Prostate gland (tissue), 2 donors: ENCODE measurements at regions of chrX and their contacts with region 1.

Region 1: GRCh38 chrX:154980330-154981096 is 42.0 kb downstream of the F8 start:
- DNase-seq: peak; percentile 62
- H3K4me3 ChIP-seq: peak overlapping the region; percentile 21
- H3K27ac ChIP-seq: no peak overlapping the region
- H3K4me1 ChIP-seq: no peaks in the 10 kb centered on the region
- H3K27me3 ChIP-seq: no peaks in the 10 kb centered on the region
- CTCF ChIP-seq: peak in 3 of 4 experiments; percentile 40 to 73 (median 67)
- POLR2A ChIP-seq: no peak

Region 2: DNA sequence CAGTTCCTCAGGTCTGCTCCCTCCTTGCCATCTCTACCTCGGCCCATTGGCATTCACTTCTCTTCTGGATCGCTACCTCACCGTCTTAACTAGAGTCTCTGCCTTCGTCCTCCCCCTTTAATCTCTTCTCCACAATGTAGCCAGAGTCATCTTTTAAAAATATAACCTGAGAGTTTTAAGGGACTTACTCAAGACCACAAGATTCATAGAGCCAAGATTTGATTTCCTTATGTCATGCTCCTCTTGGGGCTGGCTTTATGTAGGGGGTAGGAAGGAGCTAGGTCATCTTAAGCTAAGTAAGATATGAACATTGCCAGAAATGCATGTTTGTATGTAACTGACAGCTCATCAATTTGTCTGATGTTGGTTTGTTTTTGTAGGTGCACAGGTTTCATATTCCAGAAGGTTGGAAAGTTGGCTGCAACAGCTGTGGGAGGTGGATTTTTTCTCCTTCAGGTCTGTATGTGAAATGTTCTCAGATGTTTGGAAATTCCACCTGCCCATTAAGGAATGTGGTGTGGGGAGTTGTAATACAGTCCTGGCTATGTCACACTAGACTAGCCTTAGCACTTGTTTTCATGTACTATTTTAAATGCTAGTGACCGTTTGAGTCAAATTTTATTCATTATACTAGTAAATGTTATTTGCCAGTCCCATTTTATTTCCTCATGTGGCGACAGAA is 65.8 kb after region 1 on chrX:
- intact Hi-C with region 1: no loop called
- DNase-seq: no peak
- H3K4me3 ChIP-seq: no peak overlapping the region
- H3K27ac ChIP-seq: no peak overlapping the region
- H3K4me1 ChIP-seq: no peaks in the 10 kb centered on the region
- H3K27me3 ChIP-seq: no peaks in the 10 kb centered on the region
- CTCF ChIP-seq: no peak
- POLR2A ChIP-seq: no peak

Region 3: DNA sequence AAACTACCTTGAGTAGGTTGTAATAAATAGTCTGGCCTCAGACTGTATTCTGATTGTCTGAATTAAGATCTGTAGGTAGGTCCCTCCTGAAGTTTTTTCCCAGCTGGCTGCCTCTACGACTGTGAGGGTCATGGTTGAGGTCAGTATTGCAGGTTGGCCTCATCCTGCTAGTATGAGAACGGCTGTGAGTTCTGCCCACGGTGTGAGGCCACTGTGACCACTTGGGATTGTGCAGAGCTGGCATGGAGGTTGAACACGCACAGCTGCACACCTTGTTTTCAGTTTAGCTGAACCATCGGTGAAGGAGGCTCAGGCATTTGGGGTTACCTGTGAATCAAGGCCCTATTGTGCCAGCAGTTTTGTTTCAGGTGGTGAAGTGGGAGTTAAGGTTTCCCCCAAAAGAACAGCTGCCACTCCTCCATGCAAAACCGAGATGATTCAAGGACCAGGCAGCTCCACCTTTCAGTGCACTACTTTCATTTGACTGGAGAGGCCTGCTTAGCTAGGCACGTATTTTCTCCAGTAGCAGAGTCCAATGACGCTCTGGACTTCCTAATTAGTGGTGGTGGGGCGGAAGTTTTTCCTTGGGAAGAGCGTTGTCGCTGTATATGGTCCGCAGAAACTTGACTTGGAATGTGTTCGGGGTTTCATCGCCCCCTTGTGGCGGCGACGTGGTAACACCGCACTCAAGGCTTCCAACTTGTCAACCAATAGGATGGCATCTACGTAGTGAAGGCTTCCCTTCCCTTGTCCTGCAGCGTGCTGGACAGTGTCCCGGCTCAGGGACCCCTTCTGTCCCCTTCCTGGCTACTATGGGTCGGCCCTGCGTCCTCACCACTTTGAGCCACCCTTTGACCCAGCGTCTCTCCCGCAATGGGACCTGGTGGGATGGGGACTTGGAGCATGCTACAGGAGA is 76.6 kb after region 1 on chrX:
- intact Hi-C with region 1: loop called (anchors 2 kb)
- DNase-seq: peak; percentile 39
- H3K4me3 ChIP-seq: no peak overlapping the region
- H3K27ac ChIP-seq: no peak overlapping the region
- H3K4me1 ChIP-seq: no peaks in the 10 kb centered on the region
- H3K27me3 ChIP-seq: no peaks in the 10 kb centered on the region
- CTCF ChIP-seq: peak; percentile 51 to 74 (median 70)
- POLR2A ChIP-seq: no peak

Region 4: GRCh38 chrX:155070975-155071693 is 90.6 kb after region 1 on chrX and contains the starts of genes BRCC3, CMC4 and MTCP1:
- intact Hi-C with region 1: loop called (anchors 5 kb)
- DNase-seq: peak; percentile 73
- H3K4me3 ChIP-seq: peak within 1 kb of the TSS; percentile 47 to 54
- H3K27ac ChIP-seq: peak within 1 kb of the TSS; percentile 82 to 84
- H3K4me1 ChIP-seq: no peaks in the 10 kb centered on the region
- H3K27me3 ChIP-seq: no peaks in the 10 kb centered on the region
- CTCF ChIP-seq: no peak
- POLR2A ChIP-seq: peak; percentile 65
- total RNA-seq, gene BRCC3: 10.0 to 19.3 TPM
- total RNA-seq, gene CMC4: 23.2 to 27.4 TPM
- total RNA-seq, gene MTCP1: 0.36 to 15.8 TPM

Region 5: GRCh38 chrX:155086202-155086840 is 105.8 kb after region 1 on chrX:
- intact Hi-C with region 1: loop called (anchors 5 kb)
- DNase-seq: no peak
- H3K4me3 ChIP-seq: no peak overlapping the region
- H3K27ac ChIP-seq: no peak overlapping the region
- H3K4me1 ChIP-seq: no peaks in the 10 kb centered on the region
- H3K27me3 ChIP-seq: no peaks in the 10 kb centered on the region
- CTCF ChIP-seq: peak in 3 of 4 experiments; percentile 14 to 35 (median 26)
- POLR2A ChIP-seq: no peak

Region 6: DNA sequence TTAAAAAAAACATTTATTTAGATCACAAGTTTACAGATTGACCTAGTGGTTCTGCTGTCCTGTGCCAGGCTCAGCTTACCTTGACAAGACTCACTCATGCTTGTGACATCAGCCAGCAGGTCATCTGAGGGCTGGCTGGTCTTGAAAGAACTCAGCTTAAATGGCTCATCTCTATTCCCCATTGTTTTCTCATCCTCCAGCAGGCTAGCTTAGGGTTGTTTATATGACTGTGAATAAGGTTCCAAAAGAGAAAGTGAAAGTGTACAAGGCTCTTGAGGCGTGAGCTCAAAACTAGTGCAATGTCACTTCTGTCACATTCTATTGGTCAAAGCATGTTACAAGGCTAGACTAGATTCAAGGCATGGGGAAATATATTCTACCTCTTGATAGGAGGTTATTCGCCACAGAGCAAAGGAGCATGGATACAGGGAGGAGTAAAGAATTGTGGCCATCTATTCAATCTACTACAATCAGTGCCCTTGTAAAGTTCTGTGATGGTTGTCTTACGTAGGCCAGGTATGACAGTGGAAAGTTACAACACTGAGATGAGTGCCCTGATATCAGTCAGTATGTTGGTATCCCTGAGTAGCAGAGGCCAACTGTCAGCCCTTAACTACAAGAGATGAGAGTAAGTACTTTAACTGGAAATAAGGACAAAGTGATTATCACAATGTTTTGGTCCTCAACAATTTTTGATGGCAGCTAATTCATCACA is 652.0 kb after region 1 on chrX:
- intact Hi-C with region 1: no loop called
- DNase-seq: no peak
- H3K4me3 ChIP-seq: no peak overlapping the region
- H3K27ac ChIP-seq: no peak overlapping the region
- H3K4me1 ChIP-seq: no peaks in the 10 kb centered on the region
- H3K27me3 ChIP-seq: no peaks in the 10 kb centered on the region
- CTCF ChIP-seq: no peak
- POLR2A ChIP-seq: no peak